Sigmoid colon (tissue), 7 donors: ENCODE measurements at regions of chr1 and their contacts with region 1.

Region 1: DNA sequence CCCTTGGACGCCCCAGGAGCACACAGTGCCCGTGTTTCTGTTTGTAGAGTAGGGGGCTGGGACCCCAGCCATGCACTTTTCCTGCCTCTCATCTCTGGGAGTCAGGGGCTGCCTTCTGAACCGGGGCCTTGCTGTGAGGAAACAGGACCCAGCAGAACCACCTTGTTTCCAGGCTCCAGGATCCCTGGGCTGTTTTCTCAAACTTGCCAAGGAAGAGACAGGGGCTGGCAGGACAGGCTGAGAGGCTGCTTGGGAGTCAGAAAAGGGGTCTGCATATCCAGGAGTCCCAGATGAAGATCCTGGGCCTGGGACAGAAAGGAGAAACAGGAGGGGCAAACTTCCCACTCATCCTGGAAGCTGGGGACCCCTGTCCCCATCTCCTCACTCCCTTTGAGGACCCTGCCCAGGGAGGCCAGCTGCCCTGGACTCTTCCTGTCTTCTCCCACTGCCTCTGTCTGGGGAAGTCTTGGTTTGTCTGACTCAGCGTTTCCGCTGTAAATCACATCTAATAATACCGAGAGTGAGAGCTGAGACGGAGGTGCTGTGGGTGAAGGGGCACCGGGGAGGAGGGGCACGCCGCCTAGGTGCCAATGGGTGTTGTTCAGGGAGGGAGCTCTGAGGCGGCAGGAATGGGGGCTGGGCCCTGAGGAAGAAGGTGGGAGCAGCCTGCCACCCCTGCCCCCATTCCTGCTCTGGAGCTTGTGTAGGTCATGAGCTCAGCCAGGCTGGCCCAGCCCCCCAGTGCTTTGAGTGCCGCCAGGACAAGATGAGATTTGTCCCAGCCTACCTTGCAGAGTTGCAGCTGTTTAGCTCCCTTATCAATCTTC is 16.7 kb downstream of the POU3F1 start:
- DNase-seq: peak; percentile 68
- H3K4me3 ChIP-seq: peak overlapping the region in 2 of 4 donors; percentile 11 to 14
- H3K27ac ChIP-seq: peak overlapping the region in 2 of 4 donors; percentile 30 to 58
- H3K4me1 ChIP-seq: peaks cover 0 to 28% (median 22%) of the 10 kb centered on the region in 4 donors
- H3K27me3 ChIP-seq: no peaks in the 10 kb centered on the region
- CTCF ChIP-seq: no peak
- EP300 ChIP-seq: no peak
- POLR2A ChIP-seq: no peak

Region 2: GRCh38 chr1:38834937-38835827 is 805.3 kb after region 1 on chr1:
- intact Hi-C with region 1: loop called (anchors 10 kb)
- DNase-seq: no peak
- H3K4me3 ChIP-seq: no peak overlapping the region
- H3K27ac ChIP-seq: no peak overlapping the region
- H3K4me1 ChIP-seq: no peaks in the 10 kb centered on the region
- H3K27me3 ChIP-seq: no peaks in the 10 kb centered on the region
- CTCF ChIP-seq: peak; percentile 51 to 79 (median 69)
- EP300 ChIP-seq: no peak
- POLR2A ChIP-seq: no peak